ENCODE measurements at regions of chr11 and their contacts with region 1.

Region 1: GRCh38 chr11:72840780-72841179 is 26.6 kb downstream of the ATG16L2 start:
- DNase-seq: no peak
- ATAC-seq: no peak
- H3K4me3 Mint-ChIP-seq: no peak overlapping the region
- H3K27ac Mint-ChIP-seq: peak overlapping the region in 2 of 10 donors; percentile 37 to 66
- H3K4me1 Mint-ChIP-seq: peaks cover 0 to 4% (median 0%) of the 10 kb centered on the region in 4 donors
- H3K27me3 Mint-ChIP-seq: no peaks in the 10 kb centered on the region

Region 2: GRCh38 chr11:72511393-72512047 is 329.3 kb before region 1 on chr11:
- POLR2A ChIA-PET with region 1: no interaction called
- DNase-seq: no peak
- ATAC-seq: no peak
- H3K4me3 Mint-ChIP-seq: no peak overlapping the region
- H3K27ac Mint-ChIP-seq: peak overlapping the region in 1 of 10 donors; percentile 43
- H3K4me1 Mint-ChIP-seq: no peaks in the 10 kb centered on the region
- H3K27me3 Mint-ChIP-seq: peaks cover 0 to 5% (median 0%) of the 10 kb centered on the region in 5 donors

Region 3: DNA sequence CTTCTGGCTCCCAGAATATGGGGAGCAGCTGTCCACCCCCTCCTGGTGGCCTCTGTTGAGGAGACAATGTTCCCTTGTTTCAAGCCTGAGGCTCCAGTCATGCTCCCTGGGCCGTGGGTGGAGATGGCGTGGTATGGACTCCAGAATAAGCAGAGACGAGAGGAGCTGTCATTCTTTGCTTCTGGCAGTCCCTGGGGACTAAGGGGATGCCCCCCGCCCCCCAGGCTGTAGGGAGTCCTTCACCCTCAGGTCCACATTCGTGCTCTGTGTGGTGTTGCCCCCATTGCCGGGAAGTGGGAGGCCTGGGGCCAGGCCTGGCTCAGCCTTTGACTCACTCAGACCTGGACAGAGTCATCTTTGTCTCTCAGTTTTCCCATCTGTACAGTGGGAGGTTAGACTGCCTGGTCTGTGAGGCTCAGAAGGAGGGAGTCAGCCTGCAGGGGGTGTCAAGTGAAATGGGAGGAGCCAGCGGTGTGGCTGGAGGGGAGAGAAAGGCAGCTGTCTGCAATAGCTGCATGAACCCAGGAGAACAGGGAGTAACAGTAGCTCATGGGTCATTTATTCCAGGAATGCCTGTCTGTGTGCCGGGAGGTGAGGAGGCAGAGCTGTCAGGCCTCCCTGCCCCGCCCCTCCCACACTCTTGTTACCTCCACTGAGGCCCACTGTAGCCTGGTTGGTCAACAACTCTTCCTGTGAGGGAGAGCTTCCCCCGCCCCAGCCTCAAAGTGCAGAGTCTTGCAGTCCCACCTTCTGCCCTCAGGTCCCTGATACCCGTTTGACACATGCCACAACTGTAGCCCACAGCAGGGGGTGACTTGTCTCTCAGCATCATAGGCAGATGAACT is 473.6 kb after region 1 on chr11:
- POLR2A ChIA-PET with region 1: interaction called, 11 read pairs
- DNase-seq: no peak
- ATAC-seq: no peak
- H3K4me3 Mint-ChIP-seq: no peak overlapping the region
- H3K27ac Mint-ChIP-seq: peak overlapping the region in 3 of 10 donors; percentile 24 to 49 (median 40)
- H3K4me1 Mint-ChIP-seq: peaks cover 0 to 13% (median under 1%) of the 10 kb centered on the region in 4 donors
- H3K27me3 Mint-ChIP-seq: peaks cover 0 to 4% (median 0%) of the 10 kb centered on the region in 5 donors